Common myeloid progenitor, CD34-positive (primary cell): ENCODE measurements at regions of chr2 and their contacts with region 1.

Region 1: GRCh38 chr2:159133797-159134196 is 152.7 kb downstream of the WDSUB1 start:
- DNase-seq: peak; percentile 26 to 60 (median 58)
- H3K4me3 ChIP-seq: no peak overlapping the region
- H3K27ac ChIP-seq: no peak overlapping the region
- H3K4me1 ChIP-seq: peaks cover 11 to 35% (median 33%) of the 10 kb centered on the region in 4 experiments
- H3K27me3 ChIP-seq: no peaks in the 10 kb centered on the region

Region 2: GRCh38 chr2:158998551-158999248 is 135.1 kb before region 1 on chr2:
- CTCF ChIA-PET with region 1: no interaction called
- POLR2A ChIA-PET with region 1: no interaction called
- DNase-seq: peak in 1 of 3 donors; percentile 22
- H3K4me3 ChIP-seq: no peak overlapping the region
- H3K27ac ChIP-seq: no peak overlapping the region
- H3K4me1 ChIP-seq: peaks cover 7 to 33% (median 19%) of the 10 kb centered on the region in 4 experiments
- H3K27me3 ChIP-seq: no peaks in the 10 kb centered on the region

Region 3: GRCh38 chr2:159146996-159147666 is 13.3 kb after region 1 on chr2:
- CTCF ChIA-PET with region 1: interaction called, 17 read pairs
- POLR2A ChIA-PET with region 1: interaction called, 12 read pairs
- DNase-seq: peak; percentile 85 to 97 (median 96)
- H3K4me3 ChIP-seq: peak overlapping the region in 6 of 7 experiments; percentile 7 to 62 (median 36)
- H3K27ac ChIP-seq: peak overlapping the region in 1 of 2 experiments; percentile 31
- H3K4me1 ChIP-seq: peaks cover 22 to 37% (median 34%) of the 10 kb centered on the region in 4 experiments
- H3K27me3 ChIP-seq: no peaks in the 10 kb centered on the region

Region 4: DNA sequence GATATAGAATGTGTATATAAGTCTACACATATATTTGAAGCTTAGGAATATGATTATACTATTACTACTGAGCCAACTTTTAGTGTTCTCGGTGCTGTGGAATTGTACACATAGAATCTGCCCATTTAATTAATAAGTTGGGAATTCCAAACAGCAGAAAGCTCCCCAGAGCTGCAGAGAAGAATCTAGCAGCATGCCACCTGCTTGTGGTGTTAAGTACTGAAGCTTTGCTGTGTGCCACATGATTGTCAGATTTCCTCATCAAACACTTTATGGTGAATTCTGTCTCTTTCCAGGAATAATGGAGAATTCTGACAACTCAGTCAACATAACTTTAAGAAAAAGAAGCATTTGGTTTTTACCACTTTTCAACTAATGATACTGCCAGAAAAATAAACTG is 34.9 kb after region 1 on chr2:
- CTCF ChIA-PET with region 1: interaction called, 14 read pairs
- POLR2A ChIA-PET with region 1: interaction called, 3 read pairs
- DNase-seq: no peak
- H3K4me3 ChIP-seq: no peak overlapping the region
- H3K27ac ChIP-seq: no peak overlapping the region
- H3K4me1 ChIP-seq: peaks cover 9 to 21% (median 14%) of the 10 kb centered on the region in 4 experiments
- H3K27me3 ChIP-seq: no peaks in the 10 kb centered on the region

Region 5: DNA sequence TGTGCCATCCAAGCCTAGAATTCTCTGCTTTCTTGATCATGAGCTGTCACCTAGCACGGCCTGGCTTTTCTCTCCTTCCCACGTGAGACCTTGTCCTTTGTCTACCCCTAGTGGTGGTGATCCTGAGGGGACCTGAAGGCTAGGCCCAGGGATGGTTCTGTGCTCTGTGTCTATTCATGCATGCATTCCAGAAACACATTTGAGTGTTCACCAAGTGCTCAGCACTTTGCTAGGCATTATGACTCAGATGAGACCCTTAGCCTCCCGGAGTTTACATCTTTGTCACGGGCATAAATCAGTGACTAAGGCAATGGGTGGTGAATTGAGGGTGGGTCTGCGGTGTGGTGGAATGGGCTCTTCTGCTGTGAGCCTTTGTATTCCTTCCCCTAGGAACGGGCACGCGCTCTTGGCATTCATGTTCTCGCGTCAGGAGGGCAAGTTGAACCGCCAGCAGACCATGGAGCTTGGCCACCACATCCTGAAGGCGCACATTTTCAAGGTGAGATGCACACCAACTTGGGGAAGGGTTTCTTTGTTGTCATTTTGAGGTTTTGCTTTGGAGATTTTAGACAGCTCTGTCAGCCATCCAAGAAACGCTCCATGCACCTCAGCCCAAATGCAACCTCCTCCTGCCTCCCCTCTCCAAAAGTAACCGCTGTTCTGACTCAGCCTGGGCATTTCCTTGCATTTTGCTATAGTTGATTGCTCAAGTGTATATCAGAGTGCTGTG is 51.8 kb after region 1 on chr2:
- CTCF ChIA-PET with region 1: interaction called, 20 read pairs
- POLR2A ChIA-PET with region 1: no interaction called
- DNase-seq: peak; percentile 60 to 82 (median 80)
- H3K4me3 ChIP-seq: no peak overlapping the region
- H3K27ac ChIP-seq: no peak overlapping the region
- H3K4me1 ChIP-seq: no peaks in the 10 kb centered on the region
- H3K27me3 ChIP-seq: no peaks in the 10 kb centered on the region